Vagina (tissue), 2 donors: ENCODE measurements at regions of chr19 and their contacts with region 1.

Region 1: DNA sequence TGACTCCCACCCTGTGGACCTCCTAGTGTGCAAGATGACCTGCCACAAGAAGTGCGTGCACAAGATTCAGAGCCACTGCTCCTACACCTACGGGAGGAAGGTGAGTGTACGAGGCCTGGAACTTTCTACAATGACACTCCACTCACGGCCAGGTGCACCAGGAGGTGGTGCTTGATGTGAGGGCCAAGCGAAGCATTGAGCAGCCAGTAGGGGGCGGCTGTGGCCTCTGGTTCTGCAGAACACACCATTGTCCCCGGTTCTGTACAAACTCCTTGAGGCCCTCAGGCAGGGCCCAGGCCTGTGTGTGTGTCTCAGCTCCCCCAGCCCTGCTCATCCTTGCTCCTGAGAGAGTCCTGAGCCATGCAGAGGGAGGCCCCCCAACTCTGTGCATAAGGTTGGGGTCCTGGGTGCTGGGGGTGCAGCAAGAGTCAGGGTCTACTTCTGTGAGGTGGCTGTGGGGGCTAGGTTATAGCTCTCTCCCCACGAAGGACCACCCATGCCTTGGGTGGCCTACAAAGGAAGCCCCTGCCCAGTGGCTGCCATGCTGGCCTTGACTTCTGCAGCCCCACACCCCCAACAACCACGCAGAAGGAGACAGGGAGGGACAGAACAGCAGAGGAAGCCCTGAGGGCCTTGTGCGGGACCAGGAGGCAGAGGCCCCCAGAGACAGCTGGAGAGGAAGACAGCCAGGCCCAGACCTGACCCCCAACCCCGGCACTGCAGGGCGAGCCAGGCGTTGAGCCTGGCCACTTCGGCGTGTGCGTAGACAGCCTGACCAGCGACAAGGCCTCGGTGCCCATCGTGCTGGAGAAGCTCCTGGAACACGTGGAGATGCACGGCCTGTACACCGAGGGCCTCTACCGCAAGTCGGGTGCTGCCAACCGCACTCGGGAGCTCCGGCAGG is 9.7 kb upstream of the USE1 start:
- DNase-seq: no peak
- H3K4me3 ChIP-seq: no peak overlapping the region
- H3K27ac ChIP-seq: no peak overlapping the region
- H3K4me1 ChIP-seq: no peaks in the 10 kb centered on the region
- H3K27me3 ChIP-seq: no peaks in the 10 kb centered on the region
- CTCF ChIP-seq: peak; percentile 17 to 53 (median 23)
- POLR2A ChIP-seq: no peak

Region 2: GRCh38 chr19:16457195-16457953 is 748.1 kb before region 1 on chr19:
- intact Hi-C with region 1: no loop called
- DNase-seq: no peak
- H3K4me3 ChIP-seq: peak overlapping the region; percentile 14 to 31
- H3K27ac ChIP-seq: peak overlapping the region; percentile 80
- H3K4me1 ChIP-seq: peaks cover 75% of the 10 kb centered on the region
- H3K27me3 ChIP-seq: no peaks in the 10 kb centered on the region
- CTCF ChIP-seq: no peak
- POLR2A ChIP-seq: no peak

Region 3: DNA sequence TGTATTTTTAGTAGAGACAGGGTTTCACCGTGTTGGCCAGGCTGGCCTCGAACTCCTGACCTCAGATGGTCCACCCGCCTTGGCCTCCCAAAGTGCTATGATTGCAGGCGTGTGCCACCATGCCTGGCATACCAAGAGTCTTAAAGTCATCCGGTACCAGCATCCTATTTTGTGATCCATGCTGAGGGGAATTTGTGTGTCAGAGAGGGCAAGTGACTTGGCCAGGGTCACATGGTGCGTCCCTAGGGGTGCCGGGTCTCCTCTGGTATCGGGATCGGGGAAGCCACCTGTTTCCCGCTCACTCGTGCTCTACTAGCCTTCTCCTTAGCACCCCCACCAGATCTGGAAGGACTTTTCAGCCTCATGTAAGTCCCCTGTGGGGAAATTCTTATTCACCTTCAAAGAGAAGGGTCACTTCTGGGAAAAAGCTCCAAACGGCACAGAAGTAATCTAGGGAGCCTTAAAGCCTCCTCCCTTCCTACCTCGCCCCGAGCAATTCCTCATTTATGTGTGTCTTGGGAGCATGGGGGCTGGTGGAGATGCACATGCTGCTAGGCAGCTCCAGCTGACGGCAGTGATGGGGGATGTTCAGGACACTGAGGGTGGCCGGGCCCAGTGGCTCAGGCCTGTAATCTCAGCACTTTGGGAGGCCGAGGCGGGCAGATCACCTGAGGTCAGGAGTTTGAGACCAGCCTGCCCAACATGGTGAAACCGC is 70.1 kb after region 1 on chr19:
- intact Hi-C with region 1: loop called (anchors 5 kb)
- DNase-seq: no peak
- H3K4me3 ChIP-seq: no peak overlapping the region
- H3K27ac ChIP-seq: no peak overlapping the region
- H3K4me1 ChIP-seq: no peaks in the 10 kb centered on the region
- H3K27me3 ChIP-seq: no peaks in the 10 kb centered on the region
- CTCF ChIP-seq: no peak
- POLR2A ChIP-seq: no peak